B cell (primary cell): ENCODE measurements at regions of chr11 and their contacts with region 1.

Region 1: GRCh38 chr11:75896843-75897419 is 81.9 kb downstream of the UVRAG start:
- DNase-seq: peak; percentile 52
- ATAC-seq: no peak
- H3K4me3 ChIP-seq: no peak overlapping the region
- H3K4me3 Mint-ChIP-seq: no peak overlapping the region
- H3K27ac ChIP-seq: peak overlapping the region in 1 of 2 donors; percentile 6
- H3K27ac Mint-ChIP-seq: no peak overlapping the region
- H3K4me1 ChIP-seq: peaks cover 19% of the 10 kb centered on the region in 2 donors
- H3K4me1 Mint-ChIP-seq: peaks cover 41% of the 10 kb centered on the region
- H3K27me3 ChIP-seq: no peaks in the 10 kb centered on the region
- H3K27me3 Mint-ChIP-seq: no peaks in the 10 kb centered on the region
- CTCF ChIP-seq: peak; percentile 87

Region 2: GRCh38 chr11:75873417-75874221 is 23.3 kb before region 1 on chr11:
- CTCF ChIA-PET with region 1: interaction called, 34 read pairs
- POLR2A ChIA-PET with region 1: interaction called, 4 read pairs
- intact Hi-C with region 1: no loop called
- DNase-seq: peak; percentile 69
- ATAC-seq: peak; percentile 87
- H3K4me3 ChIP-seq: peak overlapping the region in 4 of 5 experiments; percentile 41 to 55 (median 42)
- H3K4me3 Mint-ChIP-seq: peak overlapping the region; percentile 84
- H3K27ac ChIP-seq: peak overlapping the region; percentile 73 to 81
- H3K27ac Mint-ChIP-seq: peak overlapping the region; percentile 94
- H3K4me1 ChIP-seq: peaks cover 38 to 44% of the 10 kb centered on the region in 2 donors
- H3K4me1 Mint-ChIP-seq: peaks cover 56% of the 10 kb centered on the region
- H3K27me3 ChIP-seq: no peaks in the 10 kb centered on the region
- H3K27me3 Mint-ChIP-seq: no peaks in the 10 kb centered on the region
- CTCF ChIP-seq: no peak

Region 3: DNA sequence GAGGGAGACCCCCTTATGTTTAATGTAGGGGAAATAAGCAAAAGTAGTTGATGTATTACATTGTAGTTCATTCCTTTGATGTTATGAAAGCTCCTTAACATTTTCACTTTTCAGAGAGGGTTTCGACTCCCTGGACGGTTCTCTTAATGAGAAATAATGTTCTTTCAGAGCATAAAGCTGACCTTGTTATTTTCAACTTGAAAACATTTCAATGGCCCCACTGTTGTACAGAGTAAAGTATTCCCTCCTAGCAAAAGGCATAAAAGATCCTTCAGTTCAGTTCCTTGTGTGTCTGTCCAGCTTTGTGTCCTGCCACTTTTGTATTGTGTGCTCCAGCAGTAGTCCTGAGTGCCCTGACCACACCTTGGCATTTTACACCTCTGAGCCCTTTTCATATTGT is 18.0 kb before region 1 on chr11:
- CTCF ChIA-PET with region 1: interaction called, 27 read pairs
- POLR2A ChIA-PET with region 1: no interaction called
- intact Hi-C with region 1: no loop called
- DNase-seq: no peak
- ATAC-seq: no peak
- H3K4me3 ChIP-seq: no peak overlapping the region
- H3K4me3 Mint-ChIP-seq: no peak overlapping the region
- H3K27ac ChIP-seq: peak overlapping the region in 1 of 2 donors; percentile 19
- H3K27ac Mint-ChIP-seq: peak overlapping the region; percentile 55
- H3K4me1 ChIP-seq: peaks cover 18 to 21% of the 10 kb centered on the region in 2 donors
- H3K4me1 Mint-ChIP-seq: peaks cover 41% of the 10 kb centered on the region
- H3K27me3 ChIP-seq: no peaks in the 10 kb centered on the region
- H3K27me3 Mint-ChIP-seq: no peaks in the 10 kb centered on the region
- CTCF ChIP-seq: no peak

Region 4: DNA sequence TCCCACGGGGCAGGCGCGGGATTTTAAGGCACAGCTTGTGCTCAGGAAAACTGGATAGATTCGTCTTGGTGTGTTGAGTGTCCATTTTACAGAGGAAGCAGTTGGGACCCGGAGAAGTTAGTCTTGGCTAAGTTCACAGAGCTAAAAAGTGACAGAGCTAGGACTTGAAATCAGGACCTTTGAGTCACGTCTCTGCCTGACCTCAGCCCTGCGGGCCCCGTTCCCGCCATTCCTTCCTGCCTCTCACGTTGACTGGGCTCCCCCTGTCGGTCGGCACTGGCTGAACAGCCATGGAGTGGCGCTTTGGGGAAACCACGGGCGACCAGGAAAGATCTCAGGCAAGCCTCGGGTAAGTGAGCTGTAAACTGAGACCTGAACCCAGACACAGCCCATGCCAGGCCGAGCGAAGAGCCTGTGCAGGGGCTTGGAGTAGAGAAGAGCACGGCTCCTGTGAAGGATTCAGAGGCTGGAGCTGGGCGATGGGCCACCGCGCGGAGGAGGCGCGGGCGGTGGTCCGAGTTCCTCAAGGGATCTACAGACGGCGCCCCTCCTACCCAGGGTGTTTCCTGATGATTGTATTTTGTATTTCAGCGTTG is 255.3 kb after region 1 on chr11:
- CTCF ChIA-PET with region 1: interaction called, 57 read pairs
- POLR2A ChIA-PET with region 1: no interaction called
- intact Hi-C with region 1: loop called (anchors 1 kb)
- DNase-seq: peak; percentile 80
- ATAC-seq: peak; percentile 82
- H3K4me3 ChIP-seq: peak overlapping the region; percentile 15 to 55 (median 47)
- H3K4me3 Mint-ChIP-seq: peak overlapping the region; percentile 74
- H3K27ac ChIP-seq: no peak overlapping the region
- H3K27ac Mint-ChIP-seq: peak overlapping the region; percentile 21
- H3K4me1 ChIP-seq: peaks cover 18 to 21% of the 10 kb centered on the region in 2 donors
- H3K4me1 Mint-ChIP-seq: peaks cover 25% of the 10 kb centered on the region
- H3K27me3 ChIP-seq: no peaks in the 10 kb centered on the region
- H3K27me3 Mint-ChIP-seq: no peaks in the 10 kb centered on the region
- CTCF ChIP-seq: peak; percentile 93